ENCODE measurements at regions of chr11 and their contacts with region 1.

Region 1: GRCh38 chr11:124758317-124759203 is 3.5 kb downstream of the ESAM start:
- DNase-seq: no peak
- H3K4me3 ChIP-seq: peak overlapping the region; percentile 33
- H3K27me3 ChIP-seq: peaks cover 23% of the 10 kb centered on the region
- CTCF ChIP-seq: peak; percentile 82

Region 2: GRCh38 chr11:124442442-124442841 is 316.1 kb before region 1 on chr11:
- CTCF ChIA-PET with region 1: no interaction called
- POLR2A ChIA-PET with region 1: no interaction called
- DNase-seq: no peak
- H3K4me3 ChIP-seq: no peak overlapping the region
- H3K27me3 ChIP-seq: no peaks in the 10 kb centered on the region
- CTCF ChIP-seq: no peak

Region 3: GRCh38 chr11:124629961-124630360 is 128.6 kb before region 1 on chr11:
- CTCF ChIA-PET with region 1: no interaction called
- POLR2A ChIA-PET with region 1: no interaction called
- DNase-seq: no peak
- H3K4me3 ChIP-seq: no peak overlapping the region
- H3K27me3 ChIP-seq: no peaks in the 10 kb centered on the region
- CTCF ChIP-seq: no peak

Region 4: GRCh38 chr11:124673333-124674167 is 85.0 kb before region 1 on chr11 and contains the starts of genes SIAE and SPA17:
- CTCF ChIA-PET with region 1: interaction called, 78 read pairs
- POLR2A ChIA-PET with region 1: no interaction called
- DNase-seq: peak; percentile 79
- H3K4me3 ChIP-seq: peak within 1 kb of the TSS; percentile 96
- H3K27me3 ChIP-seq: no peaks in the 10 kb centered on the region; the same call in 1 of the 2 replicates
- CTCF ChIP-seq: no peak
- polyA plus RNA-seq, gene SIAE: 42.1 and 43.8 TPM in 2 replicates
- polyA plus RNA-seq, gene SPA17: 2.9 and 12.1 TPM in 2 replicates

Region 5: DNA sequence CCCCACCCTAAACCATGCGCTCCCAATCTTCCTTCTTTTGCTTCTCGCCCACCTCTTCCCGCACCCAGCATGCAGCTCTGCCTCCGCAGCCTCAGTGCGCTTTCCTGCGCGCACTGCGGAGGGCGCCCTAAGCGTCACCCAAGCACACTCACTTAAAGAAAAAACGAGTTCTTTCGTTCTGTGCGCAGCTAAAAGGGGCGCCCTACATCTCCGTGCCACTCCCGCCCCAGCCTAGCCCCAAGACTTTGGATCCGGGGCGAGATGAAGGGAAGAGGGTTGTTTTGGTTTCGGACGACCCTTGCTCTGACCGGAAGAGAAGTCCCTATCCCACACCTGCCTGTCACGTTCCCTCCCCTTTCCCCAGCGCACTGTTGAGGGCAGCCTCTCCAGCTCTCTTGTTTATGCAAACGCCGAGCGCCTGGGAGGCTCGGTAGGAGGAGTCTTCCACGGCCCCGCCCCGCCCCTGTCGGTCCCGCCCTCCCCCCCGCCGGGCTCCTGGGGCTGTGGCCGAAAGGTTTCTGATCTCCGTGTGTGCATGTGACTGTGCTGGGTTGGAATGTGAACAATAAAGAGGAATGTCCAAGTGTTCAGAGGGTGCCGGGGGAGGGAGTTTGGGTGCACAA is 11.8 kb before region 1 on chr11:
- CTCF ChIA-PET with region 1: interaction called, 16 read pairs
- POLR2A ChIA-PET with region 1: no interaction called
- DNase-seq: no peak
- H3K4me3 ChIP-seq: peak overlapping the region; percentile 56
- H3K27me3 ChIP-seq: peaks cover 19% of the 10 kb centered on the region
- CTCF ChIP-seq: peak; percentile 76

Region 6: GRCh38 chr11:124778281-124778680 is 19.7 kb after region 1 on chr11:
- CTCF ChIA-PET with region 1: interaction called, 17 read pairs
- POLR2A ChIA-PET with region 1: no interaction called
- DNase-seq: no peak
- H3K4me3 ChIP-seq: no peak overlapping the region
- H3K27me3 ChIP-seq: no peaks in the 10 kb centered on the region
- CTCF ChIP-seq: no peak

Measured in BJ (cell line).